ENCODE measurements at regions of chr22 and their contacts with region 1.

Region 1: DNA sequence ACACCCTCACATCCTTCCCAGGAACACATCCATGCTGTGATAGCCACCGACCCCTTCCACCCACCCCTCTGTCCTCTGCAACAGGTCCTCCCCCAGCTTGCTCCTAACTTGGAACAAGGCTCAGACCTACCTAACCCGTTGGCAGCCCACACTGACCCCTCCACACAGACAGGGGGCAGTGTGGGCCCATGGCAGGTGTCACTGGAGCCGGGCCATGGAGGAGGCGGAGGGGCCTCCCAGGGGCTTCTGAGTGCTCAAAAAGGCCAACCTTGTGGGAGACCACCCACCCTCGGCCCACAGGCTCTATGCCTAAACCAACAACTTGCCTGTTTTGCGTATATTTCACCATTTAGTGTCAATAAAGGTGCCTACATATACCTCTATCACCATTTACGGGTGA is 57.0 kb downstream of the CERK start:
- DNase-seq: peak; percentile 40
- H3K4me3 ChIP-seq: no peak overlapping the region
- H3K27ac ChIP-seq: no peak overlapping the region
- H3K4me1 ChIP-seq: peaks cover 32% of the 10 kb centered on the region
- CTCF ChIP-seq: peak; percentile 69

Region 2: GRCh38 chr22:46592390-46592872 is 88.6 kb before region 1 on chr22:
- CTCF ChIA-PET with region 1: no interaction called
- POLR2A ChIA-PET with region 1: interaction called, 3 read pairs
- intact Hi-C with region 1: loop called (anchors 2 kb)
- DNase-seq: peak; percentile 82
- H3K4me3 ChIP-seq: peak overlapping the region; percentile 49
- H3K27ac ChIP-seq: peak overlapping the region; percentile 87
- H3K4me1 ChIP-seq: peaks cover 65% of the 10 kb centered on the region
- CTCF ChIP-seq: no peak

Region 3: GRCh38 chr22:46613606-46614021 is 67.4 kb before region 1 on chr22:
- CTCF ChIA-PET with region 1: no interaction called
- POLR2A ChIA-PET with region 1: no interaction called
- intact Hi-C with region 1: loop called (anchors 5 kb)
- DNase-seq: peak; percentile 78
- H3K4me3 ChIP-seq: peak overlapping the region; percentile 71
- H3K27ac ChIP-seq: peak overlapping the region; percentile 82
- H3K4me1 ChIP-seq: peaks cover 28% of the 10 kb centered on the region
- CTCF ChIP-seq: no peak

Region 4: DNA sequence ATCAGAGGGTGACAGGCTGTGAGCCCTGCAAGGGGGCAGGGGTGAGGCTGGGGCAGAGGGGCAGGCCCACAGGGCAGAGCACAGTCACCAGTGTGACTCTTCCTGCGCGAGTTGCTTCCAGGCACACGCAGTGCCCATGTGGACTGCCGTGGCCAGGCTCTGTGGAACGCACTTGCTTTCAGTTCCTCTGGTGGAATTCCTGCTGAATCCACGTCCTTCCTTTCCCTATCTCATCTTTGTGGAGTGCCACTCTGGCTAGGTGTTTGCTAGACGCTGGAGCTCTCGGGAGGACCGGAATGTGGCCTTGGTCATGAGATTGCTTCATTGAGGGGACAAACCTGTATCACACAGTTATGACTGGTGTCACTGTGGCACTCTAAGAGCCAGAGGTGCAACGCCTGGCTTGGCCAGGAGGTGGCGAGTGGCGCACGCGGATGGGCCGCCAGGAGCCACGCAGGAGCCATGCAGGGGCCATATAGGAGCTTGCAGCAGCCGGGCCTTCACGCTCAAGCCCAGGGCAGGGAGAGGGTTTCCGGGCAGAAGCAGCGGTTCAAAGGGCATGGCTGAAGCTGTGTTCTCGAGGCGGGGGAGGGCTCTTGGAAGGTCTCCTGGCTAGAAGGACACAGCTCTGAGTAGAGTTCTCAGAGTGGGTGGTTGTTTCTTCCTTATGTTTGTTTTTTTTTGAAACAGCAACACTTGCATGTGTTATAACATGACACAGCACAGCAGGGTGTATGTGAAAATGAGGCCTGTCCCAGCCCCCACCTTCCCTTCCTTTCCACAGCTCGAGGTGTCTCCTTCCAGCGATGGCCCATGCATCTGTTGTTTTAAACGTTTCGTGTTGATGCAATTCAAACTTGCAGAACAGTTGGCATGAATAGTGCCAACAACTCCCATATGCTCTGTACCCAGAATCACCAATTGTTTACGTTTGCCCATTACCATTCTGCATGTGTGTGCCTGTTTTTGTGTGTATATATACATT is 117.6 kb after region 1 on chr22:
- CTCF ChIA-PET with region 1: no interaction called
- POLR2A ChIA-PET with region 1: no interaction called
- intact Hi-C with region 1: loop called (anchors 10 kb)
- DNase-seq: peak; percentile 78
- H3K4me3 ChIP-seq: no peak overlapping the region
- H3K27ac ChIP-seq: no peak overlapping the region
- H3K4me1 ChIP-seq: peaks cover 7% of the 10 kb centered on the region
- CTCF ChIP-seq: peak; percentile 94